ENCODE measurements at regions of chr15 and their contacts with region 1.

Region 1: DNA sequence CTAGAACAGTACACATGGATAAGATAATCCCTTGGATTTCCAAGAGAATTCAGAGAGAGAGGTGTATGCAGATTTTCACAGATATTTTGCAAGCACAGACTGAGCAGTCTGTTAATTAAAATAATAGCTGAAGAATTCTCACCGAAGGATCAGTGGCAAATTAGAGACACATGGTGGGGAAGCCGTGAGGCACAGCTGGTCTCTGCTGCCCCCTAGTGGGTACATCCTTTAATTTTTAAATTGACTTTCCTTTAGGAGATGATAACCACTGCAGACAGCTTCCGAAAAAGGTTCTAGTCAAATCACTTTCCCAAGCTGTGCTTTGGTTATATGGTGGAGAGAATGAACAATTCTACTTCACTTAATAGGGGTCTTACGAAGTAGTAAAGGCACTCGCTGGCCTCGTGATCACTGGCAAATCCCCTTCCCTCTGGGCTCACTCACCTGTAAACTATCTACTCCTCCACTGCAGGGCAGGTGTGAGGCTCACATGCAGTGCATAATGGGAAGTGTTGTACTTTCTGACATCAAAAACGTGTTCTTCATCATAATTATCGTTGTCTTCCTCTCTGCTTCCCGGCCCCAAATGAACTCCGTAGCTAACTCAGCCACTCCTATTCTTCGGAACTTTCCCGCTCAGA is 19.5 kb downstream of the MESD start:
- DNase-seq: peak; percentile 61
- H3K4me3 ChIP-seq: no peak overlapping the region
- H3K27ac ChIP-seq: no peak overlapping the region
- H3K4me1 ChIP-seq: no peaks in the 10 kb centered on the region
- H3K27me3 ChIP-seq: no peaks in the 10 kb centered on the region
- CTCF ChIP-seq: peak; percentile 84 to 95 (median 88)
- POLR2A ChIP-seq: no peak

Region 2: DNA sequence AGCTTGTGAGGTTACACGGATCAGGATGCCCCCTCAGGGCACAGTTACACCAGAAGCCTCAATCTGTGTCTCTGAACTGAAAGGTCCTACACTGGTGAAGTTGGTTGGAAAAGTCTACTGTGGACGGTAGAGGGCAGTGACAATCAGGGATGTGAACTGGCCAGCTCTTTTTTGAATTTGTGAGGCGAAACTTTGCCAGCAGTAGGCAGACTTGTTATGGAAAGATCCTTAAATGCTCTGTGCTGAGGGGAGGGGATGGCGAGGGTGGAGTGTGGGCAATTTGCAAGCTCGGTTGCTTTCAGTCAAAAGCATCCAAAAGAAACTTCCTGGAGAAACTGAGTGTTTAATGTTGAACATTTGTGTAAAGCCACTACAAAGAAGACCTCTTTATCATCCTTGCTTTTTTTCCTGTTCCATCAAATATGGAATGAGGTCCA is 402.4 kb before region 1 on chr15:
- intact Hi-C with region 1: loop called (anchors 5 kb)
- DNase-seq: peak; percentile 59
- H3K4me3 ChIP-seq: no peak overlapping the region
- H3K27ac ChIP-seq: no peak overlapping the region
- H3K4me1 ChIP-seq: no peaks in the 10 kb centered on the region
- H3K27me3 ChIP-seq: no peaks in the 10 kb centered on the region
- CTCF ChIP-seq: peak in 3 of 4 experiments; percentile 63 to 79 (median 76)
- POLR2A ChIP-seq: no peak

Region 3: GRCh38 chr15:81740416-81740815 is 770.3 kb after region 1 on chr15:
- intact Hi-C with region 1: no loop called
- DNase-seq: no peak
- H3K4me3 ChIP-seq: no peak overlapping the region
- H3K27ac ChIP-seq: no peak overlapping the region
- H3K4me1 ChIP-seq: no peaks in the 10 kb centered on the region
- H3K27me3 ChIP-seq: no peaks in the 10 kb centered on the region
- CTCF ChIP-seq: no peak
- POLR2A ChIP-seq: no peak

Measured in prostate gland (tissue), 2 donors.